ENCODE measurements at regions of chr12 and their contacts with region 1.

Region 1: GRCh38 chr12:304805-305204 is 42.2 kb upstream of the SLC6A13 start:
- DNase-seq: no peak
- ATAC-seq: no peak
- H3K4me3 ChIP-seq: no peak overlapping the region
- H3K27ac ChIP-seq: no peak overlapping the region
- H3K4me1 ChIP-seq: peaks cover 3% of the 10 kb centered on the region; the same call in 1 of the 2 replicates
- H3K27me3 ChIP-seq: no peaks in the 10 kb centered on the region
- CTCF ChIP-seq: no peak

Region 2: DNA sequence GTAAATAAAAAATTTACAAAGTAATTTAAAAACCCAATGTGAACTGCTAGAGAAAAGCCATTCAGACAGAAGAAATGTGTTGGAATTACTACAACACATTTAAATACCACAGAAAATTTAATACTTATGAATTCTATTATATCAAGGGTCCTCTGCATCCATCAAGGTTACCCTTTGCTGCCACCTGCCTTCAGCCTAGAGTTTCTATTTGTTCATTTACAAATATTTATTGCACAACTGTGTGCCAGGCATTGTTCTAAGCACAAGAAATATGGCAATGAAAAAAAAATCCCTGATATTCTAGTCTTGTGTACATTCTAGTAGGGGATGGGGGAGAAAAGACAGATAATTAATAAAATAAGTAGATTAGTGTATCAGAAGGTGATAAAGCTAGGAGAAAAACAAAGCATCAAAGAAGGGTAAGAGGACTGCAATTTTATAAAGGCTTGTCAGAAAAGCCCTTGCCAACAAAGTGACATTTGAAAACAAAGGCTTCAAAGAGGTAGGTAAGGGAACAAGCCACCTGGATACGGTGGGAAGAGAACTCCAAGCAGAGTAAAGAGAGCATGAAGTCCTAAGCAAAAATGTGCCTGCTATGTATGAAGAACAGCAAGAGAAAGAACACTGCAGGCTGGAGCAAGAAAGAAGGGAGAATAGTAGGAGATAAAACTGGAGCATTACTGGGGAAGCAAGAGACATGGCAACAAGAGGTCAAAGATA is 17.0 kb after region 1 on chr12:
- CTCF ChIA-PET with region 1: no interaction called
- POLR2A ChIA-PET with region 1: interaction called, 13 read pairs
- in situ Hi-C with region 1: no loop called
- intact Hi-C with region 1: no loop called
- DNase-seq: no peak
- ATAC-seq: no peak
- H3K4me3 ChIP-seq: no peak overlapping the region
- H3K27ac ChIP-seq: no peak overlapping the region
- H3K4me1 ChIP-seq: no peaks in the 10 kb centered on the region
- H3K27me3 ChIP-seq: no peaks in the 10 kb centered on the region
- CTCF ChIP-seq: no peak; the same call in 1 of the 2 replicates

Measured in Panc1 (cell line).